Posterior vena cava (tissue), 2 donors: ENCODE measurements at regions of chr9 and their contacts with region 1.

Region 1: GRCh38 chr9:120778758-120779157 is 14.5 kb downstream of the FBXW2 start:
- DNase-seq: no peak

Region 2: GRCh38 chr9:120767456-120768167 is 11.1 kb before region 1 on chr9:
- intact Hi-C with region 1: loop called in 1 of 2 experiments (anchors 1 kb)
- DNase-seq: no peak

Region 3: DNA sequence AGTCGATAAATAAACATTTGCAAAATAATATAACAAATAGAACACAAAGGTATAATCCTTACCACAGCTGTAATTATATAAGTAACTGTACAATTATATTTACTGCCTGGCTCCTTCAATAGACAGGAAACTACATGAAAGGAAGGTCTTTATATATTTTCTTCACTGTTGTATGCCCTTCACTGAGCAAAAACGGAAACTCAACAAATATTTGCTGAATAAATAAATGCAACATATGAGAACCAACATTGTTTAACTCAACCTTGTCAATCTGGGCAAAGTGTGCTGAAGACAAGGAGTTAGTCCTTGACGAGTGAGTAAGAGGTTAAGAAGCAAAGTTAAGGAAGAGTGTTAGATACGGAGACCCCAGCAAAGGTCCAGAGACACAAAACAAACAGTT is 41.3 kb after region 1 on chr9:
- intact Hi-C with region 1: no loop called
- DNase-seq: no peak